CD8-positive, alpha-beta T cell (primary cell): ENCODE measurements at regions of chr12 and their contacts with region 1.

Region 1: GRCh38 chr12:67648521-67649260 is at the start of gene DYRK2:
- DNase-seq: peak; percentile 58 to 91 (median 78)
- ATAC-seq: peak; percentile 54
- H3K4me3 ChIP-seq: peak within 1 kb of the TSS; percentile 85 to 88
- H3K4me3 Mint-ChIP-seq: peak within 1 kb of the TSS; percentile 98
- H3K27ac ChIP-seq: peak within 1 kb of the TSS; percentile 79 to 82
- H3K27ac Mint-ChIP-seq: peak within 1 kb of the TSS; percentile 98
- H3K4me1 ChIP-seq: peaks cover 28% of the 10 kb centered on the region
- H3K4me1 Mint-ChIP-seq: peaks cover 42% of the 10 kb centered on the region
- H3K27me3 ChIP-seq: no peaks in the 10 kb centered on the region
- H3K27me3 Mint-ChIP-seq: no peaks in the 10 kb centered on the region
- CTCF ChIP-seq: no peak
- total RNA-seq, gene DYRK2: 118 to 122 TPM

Region 2: GRCh38 chr12:66228462-66228861 is 1420.2 kb before region 1 on chr12:
- CTCF ChIA-PET with region 1: no interaction called
- POLR2A ChIA-PET with region 1: no interaction called
- intact Hi-C with region 1: no loop called
- DNase-seq: no peak
- ATAC-seq: no peak
- H3K4me3 ChIP-seq: no peak overlapping the region
- H3K4me3 Mint-ChIP-seq: no peak overlapping the region
- H3K27ac ChIP-seq: no peak overlapping the region
- H3K27ac Mint-ChIP-seq: no peak overlapping the region
- H3K4me1 ChIP-seq: no peaks in the 10 kb centered on the region
- H3K4me1 Mint-ChIP-seq: no peaks in the 10 kb centered on the region
- H3K27me3 ChIP-seq: no peaks in the 10 kb centered on the region
- H3K27me3 Mint-ChIP-seq: peaks cover 15% of the 10 kb centered on the region
- CTCF ChIP-seq: no peak

Region 3: GRCh38 chr12:67441736-67442346 is 206.8 kb before region 1 on chr12:
- CTCF ChIA-PET with region 1: interaction called, 6 read pairs
- POLR2A ChIA-PET with region 1: interaction called, 3 read pairs
- intact Hi-C with region 1: loop called (anchors 1 to 5 kb)
- DNase-seq: peak; percentile 55 to 89 (median 80)
- ATAC-seq: peak; percentile 98
- H3K4me3 ChIP-seq: no peak overlapping the region
- H3K4me3 Mint-ChIP-seq: peak overlapping the region; percentile 45
- H3K27ac ChIP-seq: no peak overlapping the region
- H3K27ac Mint-ChIP-seq: peak overlapping the region; percentile 60
- H3K4me1 ChIP-seq: peaks cover 13% of the 10 kb centered on the region
- H3K4me1 Mint-ChIP-seq: peaks cover 26% of the 10 kb centered on the region
- H3K27me3 ChIP-seq: no peaks in the 10 kb centered on the region
- H3K27me3 Mint-ChIP-seq: no peaks in the 10 kb centered on the region
- CTCF ChIP-seq: peak; percentile 70

Region 4: GRCh38 chr12:67515679-67516340 is 132.9 kb before region 1 on chr12:
- CTCF ChIA-PET with region 1: interaction called, 5 read pairs
- POLR2A ChIA-PET with region 1: interaction called, 17 read pairs
- intact Hi-C with region 1: loop called (anchors 2 to 5 kb)
- DNase-seq: peak in 8 of 9 experiments; percentile 8 to 76 (median 44)
- ATAC-seq: peak; percentile 81
- H3K4me3 ChIP-seq: peak overlapping the region in 1 of 2 experiments; percentile 13
- H3K4me3 Mint-ChIP-seq: peak overlapping the region; percentile 63
- H3K27ac ChIP-seq: peak overlapping the region in 1 of 2 experiments; percentile 63
- H3K27ac Mint-ChIP-seq: peak overlapping the region; percentile 83
- H3K4me1 ChIP-seq: peaks cover 41% of the 10 kb centered on the region
- H3K4me1 Mint-ChIP-seq: peaks cover 54% of the 10 kb centered on the region
- H3K27me3 ChIP-seq: no peaks in the 10 kb centered on the region
- H3K27me3 Mint-ChIP-seq: no peaks in the 10 kb centered on the region
- CTCF ChIP-seq: no peak

Region 5: GRCh38 chr12:67592216-67593011 is 56.3 kb before region 1 on chr12:
- CTCF ChIA-PET with region 1: interaction called, 3 read pairs
- POLR2A ChIA-PET with region 1: interaction called, 7 read pairs
- intact Hi-C with region 1: loop called (anchors 2 to 5 kb)
- DNase-seq: peak in 2 of 9 experiments; percentile 43 to 65
- ATAC-seq: no peak
- H3K4me3 ChIP-seq: no peak overlapping the region
- H3K4me3 Mint-ChIP-seq: peak overlapping the region; percentile 50
- H3K27ac ChIP-seq: peak overlapping the region in 1 of 2 experiments; percentile 49
- H3K27ac Mint-ChIP-seq: peak overlapping the region; percentile 81
- H3K4me1 ChIP-seq: peaks cover 47% of the 10 kb centered on the region
- H3K4me1 Mint-ChIP-seq: peaks cover 60% of the 10 kb centered on the region
- H3K27me3 ChIP-seq: no peaks in the 10 kb centered on the region
- H3K27me3 Mint-ChIP-seq: no peaks in the 10 kb centered on the region
- CTCF ChIP-seq: peak; percentile 16

Region 6: DNA sequence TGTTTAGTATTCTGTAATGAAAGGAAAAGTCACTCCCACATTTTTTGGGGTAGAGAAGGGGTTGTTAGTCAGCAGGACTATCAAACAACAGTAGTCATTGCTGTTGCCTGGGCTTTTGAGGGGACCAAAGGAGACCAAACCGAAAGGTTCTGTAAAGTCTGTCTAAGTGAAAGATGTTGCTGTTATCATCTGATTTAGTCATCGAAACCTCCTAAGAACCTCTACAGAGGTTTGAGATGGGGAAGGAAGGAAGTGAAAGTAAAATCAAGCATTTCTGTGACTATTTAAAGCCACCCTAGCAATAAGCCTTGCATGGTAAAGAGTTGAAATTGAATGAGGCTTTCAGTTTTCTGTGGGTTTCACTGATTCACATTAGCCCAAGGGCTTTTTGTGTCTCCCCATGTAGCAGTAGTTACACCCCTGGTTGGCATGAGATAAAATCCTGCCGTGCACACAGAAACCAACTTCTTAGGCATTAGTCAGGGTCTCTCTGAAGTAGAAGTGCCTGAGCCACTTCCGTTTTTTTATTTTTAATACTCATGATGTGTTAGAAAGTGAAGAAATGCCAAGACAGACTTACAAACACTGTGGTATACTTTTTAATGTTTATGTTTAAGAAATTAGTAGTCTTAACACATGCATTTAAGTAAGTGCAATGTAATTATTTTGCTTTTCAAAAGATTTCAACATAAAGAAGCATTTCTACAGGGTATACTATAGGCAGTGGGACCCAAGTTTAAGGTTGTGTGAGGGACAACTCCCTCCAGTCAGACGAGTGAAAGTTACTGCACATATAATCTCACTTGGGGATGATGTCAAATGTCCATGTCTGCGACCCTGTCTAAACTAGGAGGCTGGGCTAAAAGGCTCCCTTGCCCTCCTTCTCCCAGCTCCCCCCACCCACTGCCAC is 50.2 kb after region 1 on chr12:
- CTCF ChIA-PET with region 1: interaction called, 4 read pairs
- POLR2A ChIA-PET with region 1: interaction called, 3 read pairs
- intact Hi-C with region 1: loop called (anchors 2 to 5 kb)
- DNase-seq: peak in 8 of 9 experiments; percentile 26 to 72 (median 58)
- ATAC-seq: peak; percentile 80
- H3K4me3 ChIP-seq: peak overlapping the region; percentile 23 to 46
- H3K4me3 Mint-ChIP-seq: peak overlapping the region; percentile 82
- H3K27ac ChIP-seq: peak overlapping the region; percentile 6 to 72
- H3K27ac Mint-ChIP-seq: peak overlapping the region; percentile 89
- H3K4me1 ChIP-seq: peaks cover 28% of the 10 kb centered on the region
- H3K4me1 Mint-ChIP-seq: peaks cover 73% of the 10 kb centered on the region
- H3K27me3 ChIP-seq: no peaks in the 10 kb centered on the region
- H3K27me3 Mint-ChIP-seq: no peaks in the 10 kb centered on the region
- CTCF ChIP-seq: no peak

Region 7: DNA sequence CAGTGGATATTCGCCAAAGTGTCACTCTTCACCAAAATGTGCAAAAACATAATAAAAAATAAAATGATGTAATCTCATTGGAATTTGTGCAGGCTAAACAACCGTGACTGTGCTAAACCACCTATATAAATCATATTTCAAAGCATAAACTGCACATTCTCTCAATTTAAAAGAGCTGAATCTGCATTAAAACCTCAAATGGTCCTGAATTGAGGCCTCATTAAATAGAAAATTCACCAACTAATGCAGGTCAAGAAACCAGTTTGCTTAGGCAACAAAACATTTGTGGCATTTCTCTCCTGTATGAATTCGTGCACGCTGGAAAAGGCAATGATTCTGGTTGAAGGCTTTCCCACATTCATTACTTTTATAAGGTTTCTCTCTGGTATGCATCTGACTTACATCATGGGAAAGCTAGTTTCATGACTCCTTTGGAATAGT is 260.4 kb after region 1 on chr12:
- CTCF ChIA-PET with region 1: no interaction called
- POLR2A ChIA-PET with region 1: no interaction called
- intact Hi-C with region 1: no loop called
- DNase-seq: no peak
- ATAC-seq: no peak
- H3K4me3 ChIP-seq: no peak overlapping the region
- H3K4me3 Mint-ChIP-seq: no peak overlapping the region
- H3K27ac ChIP-seq: no peak overlapping the region
- H3K27ac Mint-ChIP-seq: no peak overlapping the region
- H3K4me1 ChIP-seq: no peaks in the 10 kb centered on the region
- H3K4me1 Mint-ChIP-seq: no peaks in the 10 kb centered on the region
- H3K27me3 ChIP-seq: no peaks in the 10 kb centered on the region
- H3K27me3 Mint-ChIP-seq: no peaks in the 10 kb centered on the region
- CTCF ChIP-seq: no peak

Region 8: GRCh38 chr12:68080577-68080976 is 431.9 kb after region 1 on chr12:
- CTCF ChIA-PET with region 1: no interaction called
- POLR2A ChIA-PET with region 1: no interaction called
- intact Hi-C with region 1: no loop called
- DNase-seq: peak; percentile 2 to 80 (median 34)
- ATAC-seq: peak; percentile 78
- H3K4me3 ChIP-seq: no peak overlapping the region
- H3K4me3 Mint-ChIP-seq: no peak overlapping the region
- H3K27ac ChIP-seq: peak overlapping the region in 1 of 2 experiments; percentile 43
- H3K27ac Mint-ChIP-seq: peak overlapping the region; percentile 49
- H3K4me1 ChIP-seq: peaks cover 21% of the 10 kb centered on the region
- H3K4me1 Mint-ChIP-seq: peaks cover 29% of the 10 kb centered on the region
- H3K27me3 ChIP-seq: no peaks in the 10 kb centered on the region
- H3K27me3 Mint-ChIP-seq: no peaks in the 10 kb centered on the region
- CTCF ChIP-seq: no peak

Region 9: GRCh38 chr12:68175557-68176061 is 526.9 kb after region 1 on chr12:
- CTCF ChIA-PET with region 1: no interaction called
- POLR2A ChIA-PET with region 1: no interaction called
- intact Hi-C with region 1: loop called in 1 of 2 experiments (anchors 10 kb)
- DNase-seq: peak; percentile 26 to 95 (median 60)
- ATAC-seq: peak; percentile 86
- H3K4me3 ChIP-seq: peak overlapping the region; percentile 19 to 33
- H3K4me3 Mint-ChIP-seq: peak overlapping the region; percentile 77
- H3K27ac ChIP-seq: peak overlapping the region; percentile 62 to 71
- H3K27ac Mint-ChIP-seq: peak overlapping the region; percentile 95
- H3K4me1 ChIP-seq: peaks cover 66% of the 10 kb centered on the region
- H3K4me1 Mint-ChIP-seq: peaks cover 67% of the 10 kb centered on the region
- H3K27me3 ChIP-seq: no peaks in the 10 kb centered on the region
- H3K27me3 Mint-ChIP-seq: no peaks in the 10 kb centered on the region
- CTCF ChIP-seq: no peak